ENCODE measurements at regions of chr20 and their contacts with region 1.

Region 1: GRCh38 chr20:11849976-11850670 is 67.6 kb upstream of the BTBD3 start:
- DNase-seq: peak in 1 of 5 donors; percentile 37
- H3K4me3 ChIP-seq: no peak overlapping the region
- H3K27ac ChIP-seq: no peak overlapping the region
- H3K4me1 ChIP-seq: peaks cover 2% of the 10 kb centered on the region
- H3K27me3 ChIP-seq: no peaks in the 10 kb centered on the region
- CTCF ChIP-seq: no peak
- EP300 ChIP-seq: no peak
- POLR2A ChIP-seq: no peak

Region 2: GRCh38 chr20:11780765-11781369 is 69.3 kb before region 1 on chr20:
- intact Hi-C with region 1: loop called in 1 of 4 experiments (anchors 10 kb)
- DNase-seq: no peak
- H3K4me3 ChIP-seq: no peak overlapping the region
- H3K27ac ChIP-seq: no peak overlapping the region
- H3K4me1 ChIP-seq: peaks cover 3% of the 10 kb centered on the region
- H3K27me3 ChIP-seq: no peaks in the 10 kb centered on the region
- CTCF ChIP-seq: no peak
- EP300 ChIP-seq: no peak
- POLR2A ChIP-seq: no peak